ENCODE measurements at regions of chr7 and their contacts with region 1.

Region 1: GRCh38 chr7:102404005-102404861 is 8.1 kb downstream of the PRKRIP1 start:
- DNase-seq: peak; percentile 65
- CTCF ChIP-seq: peak; percentile 86

Region 2: GRCh38 chr7:101436857-101437576 is 967.2 kb before region 1 on chr7:
- in situ Hi-C with region 1: no loop called
- DNase-seq: no peak
- CTCF ChIP-seq: no peak

Region 3: DNA sequence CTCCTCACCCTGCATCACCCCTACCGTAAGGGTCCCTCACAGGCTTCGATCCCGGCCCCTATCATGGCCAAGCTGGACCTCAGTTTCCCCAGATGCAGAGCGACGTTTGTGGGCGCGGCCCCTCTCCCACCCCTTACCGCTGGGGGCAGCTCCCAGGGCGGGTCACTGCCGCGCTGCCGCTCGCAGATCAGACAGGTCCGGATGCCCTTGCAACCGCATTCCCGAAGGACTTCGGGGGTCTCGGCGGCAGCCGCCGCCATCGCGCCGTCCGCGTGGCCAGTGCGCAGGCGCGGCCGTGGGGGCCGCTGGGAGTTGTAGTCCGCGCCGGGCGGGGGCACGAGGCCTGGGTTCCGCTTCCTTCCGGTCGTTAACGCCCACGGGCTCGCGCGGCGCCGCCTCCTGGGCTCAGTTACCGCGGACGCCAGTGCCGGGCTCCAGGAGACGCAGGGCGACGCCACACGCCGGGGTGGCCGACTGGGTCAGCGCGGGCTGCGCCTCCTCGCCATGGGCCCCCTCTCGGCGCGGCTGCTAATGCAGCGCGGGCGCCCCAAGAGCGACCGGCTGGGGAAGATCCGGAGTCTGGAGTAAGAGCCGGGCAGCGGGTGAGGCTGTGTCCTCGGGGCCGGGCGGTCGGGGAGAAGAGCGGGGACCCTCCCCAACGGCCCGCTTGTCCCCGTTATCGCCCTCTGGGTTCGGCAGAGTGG is 60.5 kb after region 1 on chr7 and contains the starts of genes ALKBH4 and LRWD1:
- in situ Hi-C with region 1: loop called (anchors 5 kb)
- DNase-seq: peak; percentile 100
- CTCF ChIP-seq: peak; percentile 26

Measured in GM13977 (cell line).